ENCODE measurements at regions of chr20 and their contacts with region 1.

Region 1: GRCh38 chr20:47326658-47327268 is 29.7 kb downstream of the ZMYND8 start:
- DNase-seq: no peak
- ATAC-seq: no peak
- H3K4me3 ChIP-seq: no peak overlapping the region
- H3K27ac ChIP-seq: peak overlapping the region; percentile 99
- H3K4me1 ChIP-seq: peaks cover 67% of the 10 kb centered on the region
- H3K27me3 ChIP-seq: no peaks in the 10 kb centered on the region
- CTCF ChIP-seq: no peak

Region 2: DNA sequence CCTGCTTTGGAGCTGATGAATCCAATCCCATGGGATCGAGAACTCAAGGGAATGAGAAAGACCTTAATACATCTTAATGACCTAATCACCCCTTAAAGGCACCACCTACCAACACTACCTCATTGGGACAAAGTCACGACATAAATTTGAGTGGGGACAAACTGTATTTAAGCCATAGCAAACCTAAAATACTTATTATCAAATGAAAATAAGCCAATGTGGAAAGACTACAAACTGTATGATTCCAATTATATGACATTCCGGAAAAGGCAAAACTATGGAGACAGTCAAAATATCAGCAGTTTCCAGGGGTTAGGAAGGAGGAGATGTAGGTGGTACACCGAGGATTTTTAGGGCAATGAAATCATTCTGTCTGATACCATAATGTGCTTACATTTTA is 121.7 kb after region 1 on chr20:
- CTCF ChIA-PET with region 1: no interaction called
- POLR2A ChIA-PET with region 1: interaction called, 14 read pairs
- in situ Hi-C with region 1: no loop called
- intact Hi-C with region 1: no loop called
- DNase-seq: no peak
- ATAC-seq: no peak
- H3K4me3 ChIP-seq: no peak overlapping the region
- H3K27ac ChIP-seq: no peak overlapping the region
- H3K4me1 ChIP-seq: 0 out of 2 replicates have a peak, but pooled peaks cover 9% of the 10 kb centered on the region
- H3K27me3 ChIP-seq: no peaks in the 10 kb centered on the region
- CTCF ChIP-seq: no peak

Measured in Panc1 (cell line).